MCF 10A (cell line): ENCODE measurements at regions of chr20 and their contacts with region 1.

Region 1: GRCh38 chr20:9616833-9617489 is 102.6 kb downstream of the LAMP5 start:
- DNase-seq: peak; percentile 72
- H3K4me3 Mint-ChIP-seq: no peak overlapping the region
- H3K27ac Mint-ChIP-seq: no peak overlapping the region
- H3K4me1 Mint-ChIP-seq: no peaks in the 10 kb centered on the region
- H3K27me3 Mint-ChIP-seq: peaks cover 28% of the 10 kb centered on the region
- CTCF ChIP-seq: peak; percentile 93

Region 2: DNA sequence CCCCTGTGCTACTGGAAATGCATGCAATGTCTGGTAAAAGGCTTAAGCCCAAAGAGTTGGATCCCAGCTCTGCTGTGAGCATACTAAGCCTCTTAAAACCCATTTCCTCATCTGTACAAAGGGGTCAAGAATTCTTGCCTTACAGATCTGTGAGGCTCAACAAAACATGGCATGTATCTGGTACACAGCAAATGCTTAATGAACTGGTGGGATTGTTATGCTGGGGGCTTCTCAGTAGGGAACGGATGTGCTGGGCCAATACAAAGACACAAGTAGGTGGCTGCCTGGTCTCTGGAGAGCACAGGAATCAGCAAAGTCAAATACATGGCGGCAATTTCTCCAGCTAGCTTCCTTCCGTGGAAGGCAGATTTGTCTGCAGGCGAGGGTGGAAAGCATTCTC is 40.3 kb before region 1 on chr20:
- CTCF ChIA-PET with region 1: no interaction called
- POLR2A ChIA-PET with region 1: no interaction called
- intact Hi-C with region 1: no loop called
- DNase-seq: no peak
- H3K4me3 Mint-ChIP-seq: no peak overlapping the region
- H3K27ac Mint-ChIP-seq: no peak overlapping the region
- H3K4me1 Mint-ChIP-seq: no peaks in the 10 kb centered on the region
- H3K27me3 Mint-ChIP-seq: no peaks in the 10 kb centered on the region
- CTCF ChIP-seq: no peak

Region 3: DNA sequence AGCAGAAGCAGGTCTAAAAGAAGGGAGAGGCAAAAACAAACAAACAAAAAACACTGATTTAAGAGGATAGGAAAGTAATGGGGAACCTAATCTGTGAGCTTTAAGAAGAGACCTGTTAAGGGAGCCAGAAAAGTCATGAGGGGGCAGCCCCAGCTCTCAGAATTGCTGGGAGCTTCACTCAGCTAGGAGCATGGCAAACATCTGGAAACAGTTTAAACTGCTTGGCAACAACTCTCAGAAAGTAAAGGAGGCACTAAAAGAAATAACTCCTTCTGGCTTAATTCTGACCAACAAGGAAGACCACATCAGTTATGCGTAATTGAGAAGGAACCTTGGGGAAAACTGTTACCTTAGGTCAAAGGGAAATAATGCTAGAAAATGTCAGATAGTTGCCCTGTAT is 18.8 kb after region 1 on chr20:
- CTCF ChIA-PET with region 1: interaction called, 20 read pairs
- POLR2A ChIA-PET with region 1: interaction called, 3 read pairs
- intact Hi-C with region 1: no loop called
- DNase-seq: no peak
- H3K4me3 Mint-ChIP-seq: no peak overlapping the region
- H3K27ac Mint-ChIP-seq: no peak overlapping the region
- H3K4me1 Mint-ChIP-seq: no peaks in the 10 kb centered on the region
- H3K27me3 Mint-ChIP-seq: no peaks in the 10 kb centered on the region
- CTCF ChIP-seq: no peak

Region 4: GRCh38 chr20:9903048-9903655 is 286.2 kb after region 1 on chr20:
- CTCF ChIA-PET with region 1: interaction called, 130 read pairs
- POLR2A ChIA-PET with region 1: no interaction called
- intact Hi-C with region 1: no loop called
- DNase-seq: peak; percentile 25
- H3K4me3 Mint-ChIP-seq: no peak overlapping the region
- H3K27ac Mint-ChIP-seq: no peak overlapping the region
- H3K4me1 Mint-ChIP-seq: no peaks in the 10 kb centered on the region
- H3K27me3 Mint-ChIP-seq: peaks cover 35% of the 10 kb centered on the region
- CTCF ChIP-seq: peak; percentile 32

Region 5: DNA sequence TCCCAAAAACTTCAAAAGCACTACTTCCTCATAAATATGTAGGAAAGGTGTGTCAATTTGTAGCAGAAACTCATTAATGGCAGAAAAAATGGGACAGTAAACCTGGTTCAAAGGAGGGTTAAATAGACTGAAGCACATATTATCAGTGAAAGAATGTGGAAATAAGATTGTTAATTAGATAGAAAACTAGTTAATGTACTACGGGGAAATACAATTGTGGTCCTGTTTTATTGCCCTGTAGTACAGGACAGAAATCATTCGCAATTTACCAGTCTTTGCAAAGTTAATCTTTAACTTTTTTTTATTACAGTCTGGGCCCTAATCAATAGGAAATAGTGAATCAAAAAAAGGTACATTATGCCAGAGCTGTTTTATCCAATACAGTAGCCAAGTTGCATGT is 303.9 kb after region 1 on chr20:
- CTCF ChIA-PET with region 1: interaction called, 130 read pairs
- POLR2A ChIA-PET with region 1: no interaction called
- intact Hi-C with region 1: no loop called
- DNase-seq: no peak
- H3K4me3 Mint-ChIP-seq: no peak overlapping the region
- H3K27ac Mint-ChIP-seq: no peak overlapping the region
- H3K4me1 Mint-ChIP-seq: no peaks in the 10 kb centered on the region
- H3K27me3 Mint-ChIP-seq: no peaks in the 10 kb centered on the region
- CTCF ChIP-seq: no peak

Region 6: DNA sequence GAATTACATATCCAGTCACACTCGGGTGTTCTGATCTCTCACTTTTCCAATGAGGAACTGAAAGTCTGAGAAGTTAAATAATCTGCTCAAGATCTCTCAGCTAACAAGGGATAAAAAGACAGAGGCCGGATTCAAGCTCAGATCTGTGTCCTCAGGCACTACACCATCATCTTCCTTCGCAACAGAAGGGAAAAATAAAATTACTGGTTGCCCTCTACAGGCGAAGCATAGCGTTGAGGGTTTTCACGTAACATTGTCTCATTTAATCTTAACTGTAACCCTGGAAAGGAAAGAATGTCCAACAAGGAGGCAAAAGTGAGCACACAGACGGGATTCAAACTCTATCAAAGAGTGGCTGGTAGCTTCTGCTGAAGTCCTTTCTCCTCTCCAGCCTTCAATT is 350.0 kb after region 1 on chr20:
- CTCF ChIA-PET with region 1: interaction called, 88 read pairs
- POLR2A ChIA-PET with region 1: no interaction called
- intact Hi-C with region 1: loop called (anchors 1 kb)
- DNase-seq: peak; percentile 37
- H3K4me3 Mint-ChIP-seq: no peak overlapping the region
- H3K27ac Mint-ChIP-seq: no peak overlapping the region
- H3K4me1 Mint-ChIP-seq: no peaks in the 10 kb centered on the region
- H3K27me3 Mint-ChIP-seq: no peaks in the 10 kb centered on the region
- CTCF ChIP-seq: peak; percentile 41